Head of caudate nucleus (tissue), 42 donors: ENCODE measurements at regions of chr11 and their contacts with region 1.

Region 1: GRCh38 chr11:62905927-62906531 is 15.1 kb downstream of the CHRM1 start:
- DNase-seq: peak; percentile 62 to 93 (median 88)

Region 2: GRCh38 chr11:63023841-63024648 is 118.0 kb after region 1 on chr11:
- intact Hi-C with region 1: loop called (anchors 2 kb)
- DNase-seq: peak; percentile 82 to 97 (median 94)